Activated CD8-positive, alpha-beta T cell treated with anti-CD3 and anti-CD28 coated beads for 36 hours (primary cell): ENCODE measurements at regions of chr7 and their contacts with region 1.

Region 1: GRCh38 chr7:26200444-26201246 is at the start of gene HNRNPA2B1:
- DNase-seq: peak; percentile 98
- ATAC-seq: peak; percentile 73
- H3K4me3 Mint-ChIP-seq: peak within 1 kb of the TSS; percentile 100
- H3K27ac Mint-ChIP-seq: peak within 1 kb of the TSS; percentile 100
- H3K4me1 Mint-ChIP-seq: peaks cover 32% of the 10 kb centered on the region
- H3K27me3 Mint-ChIP-seq: peaks cover 3% of the 10 kb centered on the region
- CTCF ChIP-seq: no peak
- total RNA-seq, gene HNRNPA2B1: 871 to 893 TPM

Region 2: GRCh38 chr7:25940086-25940906 is 260.3 kb before region 1 on chr7:
- CTCF ChIA-PET with region 1: no interaction called
- POLR2A ChIA-PET with region 1: no interaction called
- intact Hi-C with region 1: no loop called
- DNase-seq: no peak
- ATAC-seq: peak; percentile 39
- H3K4me3 Mint-ChIP-seq: peak overlapping the region; percentile 41
- H3K27ac Mint-ChIP-seq: peak overlapping the region; percentile 70
- H3K4me1 Mint-ChIP-seq: peaks cover 12% of the 10 kb centered on the region
- H3K27me3 Mint-ChIP-seq: peaks cover 16% of the 10 kb centered on the region
- CTCF ChIP-seq: no peak

Region 3: DNA sequence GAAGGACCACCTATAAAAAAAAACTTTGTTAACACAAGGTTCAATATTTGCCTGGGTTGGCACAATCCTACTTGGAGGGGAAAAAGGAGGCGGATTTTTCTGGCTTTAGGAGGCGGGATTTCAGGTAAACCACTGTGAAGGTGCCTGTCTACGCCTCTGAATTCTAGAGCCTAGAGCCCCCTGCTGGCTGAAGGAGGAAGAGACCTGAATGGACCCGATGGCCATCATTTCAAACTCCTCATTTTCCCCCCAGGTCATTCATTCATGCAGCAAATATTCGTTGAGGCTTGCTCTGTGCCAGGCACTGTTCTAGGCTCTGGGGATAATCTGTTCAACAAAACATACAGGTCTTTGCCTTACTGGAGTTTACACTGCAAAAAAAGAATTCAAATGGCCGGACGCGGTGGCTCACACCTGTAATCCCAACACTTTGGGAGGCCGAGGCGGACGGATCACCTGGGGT is 138.9 kb before region 1 on chr7:
- CTCF ChIA-PET with region 1: no interaction called
- POLR2A ChIA-PET with region 1: no interaction called
- intact Hi-C with region 1: no loop called
- DNase-seq: peak; percentile 89
- ATAC-seq: peak; percentile 89
- H3K4me3 Mint-ChIP-seq: no peak overlapping the region
- H3K27ac Mint-ChIP-seq: no peak overlapping the region
- H3K4me1 Mint-ChIP-seq: peaks cover 9% of the 10 kb centered on the region
- H3K27me3 Mint-ChIP-seq: peaks cover 18% of the 10 kb centered on the region
- CTCF ChIP-seq: peak; percentile 93

Region 4: GRCh38 chr7:26101361-26102151 is 99.1 kb before region 1 on chr7:
- CTCF ChIA-PET with region 1: no interaction called
- POLR2A ChIA-PET with region 1: interaction called, 17 read pairs
- intact Hi-C with region 1: no loop called
- DNase-seq: peak; percentile 30
- ATAC-seq: no peak
- H3K4me3 Mint-ChIP-seq: peak overlapping the region; percentile 60
- H3K27ac Mint-ChIP-seq: peak overlapping the region; percentile 83
- H3K4me1 Mint-ChIP-seq: peaks cover 47% of the 10 kb centered on the region
- H3K27me3 Mint-ChIP-seq: no peaks in the 10 kb centered on the region
- CTCF ChIP-seq: no peak

Region 5: DNA sequence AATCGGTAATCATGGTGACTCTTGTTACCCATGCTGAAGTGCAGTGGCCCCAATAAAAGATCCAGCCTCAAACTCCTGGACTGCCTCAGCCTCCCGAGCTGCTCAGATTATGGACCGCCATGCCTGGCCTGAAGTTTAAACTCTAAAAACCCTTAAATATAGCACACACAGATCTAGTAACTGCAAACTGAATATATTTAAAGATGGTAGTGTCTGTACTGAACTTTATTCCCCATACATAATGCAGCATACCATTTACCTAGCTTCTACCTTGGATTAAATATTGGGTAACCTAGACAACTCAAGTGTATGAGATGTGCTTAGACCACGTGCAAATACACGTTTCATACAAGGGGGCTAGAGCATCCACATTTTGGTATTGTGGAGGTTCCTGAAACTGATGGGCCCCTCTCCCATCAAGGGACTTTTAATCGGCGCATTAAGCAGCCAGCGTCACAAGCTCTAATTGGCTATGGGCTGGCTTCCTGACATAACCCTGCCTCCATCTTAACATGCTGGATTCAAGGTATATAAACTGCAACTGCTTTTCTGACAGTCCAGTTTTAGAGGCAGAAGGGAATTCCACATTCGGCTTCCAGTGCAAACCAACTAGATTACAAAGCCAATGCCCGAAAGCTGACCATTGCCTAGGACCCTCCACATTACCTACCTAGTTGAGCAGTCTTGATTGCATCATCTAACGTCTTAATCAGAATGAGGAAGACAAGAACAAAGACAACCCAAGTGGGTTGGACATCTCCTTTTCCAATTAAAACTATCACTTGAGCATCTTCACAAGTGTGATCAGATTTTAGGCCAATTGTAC is 13.1 kb before region 1 on chr7:
- CTCF ChIA-PET with region 1: interaction called, 11 read pairs
- POLR2A ChIA-PET with region 1: interaction called, 588 read pairs
- intact Hi-C with region 1: no loop called
- DNase-seq: peak; percentile 40
- ATAC-seq: peak; percentile 21
- H3K4me3 Mint-ChIP-seq: peak overlapping the region; percentile 11
- H3K27ac Mint-ChIP-seq: peak overlapping the region; percentile 85
- H3K4me1 Mint-ChIP-seq: peaks cover 87% of the 10 kb centered on the region
- H3K27me3 Mint-ChIP-seq: no peaks in the 10 kb centered on the region
- CTCF ChIP-seq: no peak

Region 6: DNA sequence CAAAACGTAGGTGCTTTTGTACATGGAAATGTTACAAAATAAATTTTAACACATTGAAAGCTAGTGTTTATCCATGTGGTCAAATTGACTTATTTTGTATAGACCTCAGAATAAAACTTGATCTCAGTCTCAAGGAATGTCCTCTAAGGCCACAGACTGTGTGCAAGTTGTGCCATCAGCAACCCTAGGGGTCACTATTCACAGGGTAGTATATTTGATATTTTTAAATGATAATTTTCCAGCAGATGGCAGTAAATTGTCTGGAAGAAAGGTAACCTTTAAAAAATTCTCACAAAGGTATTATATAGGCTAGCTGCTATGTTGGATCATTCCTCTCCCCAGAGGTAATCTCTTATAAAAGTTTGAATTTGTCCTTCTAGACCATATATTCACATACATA is 78.1 kb after region 1 on chr7:
- CTCF ChIA-PET with region 1: no interaction called
- POLR2A ChIA-PET with region 1: interaction called, 3 read pairs
- intact Hi-C with region 1: loop called (anchors 5 kb)
- DNase-seq: peak; percentile 10
- ATAC-seq: peak; percentile 37
- H3K4me3 Mint-ChIP-seq: no peak overlapping the region
- H3K27ac Mint-ChIP-seq: no peak overlapping the region
- H3K4me1 Mint-ChIP-seq: peaks cover 24% of the 10 kb centered on the region
- H3K27me3 Mint-ChIP-seq: no peaks in the 10 kb centered on the region
- CTCF ChIP-seq: peak; percentile 44

Region 7: DNA sequence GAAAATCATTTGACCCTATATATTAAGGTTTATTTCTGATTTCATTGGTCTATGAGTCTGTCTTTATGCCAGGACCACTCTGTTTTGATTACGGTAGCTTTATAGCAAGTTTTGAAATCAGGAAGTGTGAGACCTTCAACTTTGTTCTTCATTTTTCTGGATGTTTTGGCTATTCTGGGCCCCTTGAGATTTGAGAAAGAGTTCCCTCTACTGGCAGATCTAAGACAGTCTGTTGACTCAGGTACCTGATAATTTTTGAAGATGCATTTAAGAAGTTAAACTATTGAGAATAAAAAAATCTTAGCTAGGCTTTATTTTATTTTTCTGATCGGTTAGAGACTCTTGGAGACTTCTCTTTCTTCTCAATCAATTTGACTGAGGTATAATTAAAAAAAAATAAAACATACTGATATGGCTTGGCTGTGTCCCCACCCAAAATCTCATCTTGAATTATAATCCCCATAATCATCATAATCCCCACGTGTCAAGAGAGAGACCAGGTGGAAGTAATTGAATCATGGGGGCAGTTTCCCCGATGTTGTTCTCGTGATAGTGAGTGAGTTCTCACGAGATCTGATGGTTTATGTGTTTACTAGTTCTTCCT is 300.2 kb after region 1 on chr7:
- CTCF ChIA-PET with region 1: no interaction called
- POLR2A ChIA-PET with region 1: no interaction called
- intact Hi-C with region 1: no loop called
- DNase-seq: no peak
- ATAC-seq: peak; percentile 58
- H3K4me3 Mint-ChIP-seq: no peak overlapping the region
- H3K27ac Mint-ChIP-seq: no peak overlapping the region
- H3K4me1 Mint-ChIP-seq: no peaks in the 10 kb centered on the region
- H3K27me3 Mint-ChIP-seq: peaks cover 6% of the 10 kb centered on the region
- CTCF ChIP-seq: peak; percentile 50